ENCODE measurements at regions of chr16 and their contacts with region 1.

Region 1: GRCh38 chr16:8950580-8951077 is 13.1 kb downstream of the USP7 start:
- DNase-seq: no peak
- ATAC-seq: no peak
- H3K4me3 Mint-ChIP-seq: peak overlapping the region; percentile 35
- H3K27ac Mint-ChIP-seq: peak overlapping the region; percentile 30
- H3K4me1 Mint-ChIP-seq: peaks cover 88% of the 10 kb centered on the region
- H3K27me3 Mint-ChIP-seq: no peaks in the 10 kb centered on the region
- CTCF ChIP-seq: no peak

Region 2: GRCh38 chr16:8936421-8936820 is 14.2 kb before region 1 on chr16:
- CTCF ChIA-PET with region 1: interaction called, 24 read pairs
- POLR2A ChIA-PET with region 1: no interaction called
- intact Hi-C with region 1: no loop called
- DNase-seq: no peak
- ATAC-seq: peak; percentile 98
- H3K4me3 Mint-ChIP-seq: no peak overlapping the region
- H3K27ac Mint-ChIP-seq: peak overlapping the region; percentile 50
- H3K4me1 Mint-ChIP-seq: peaks cover 92% of the 10 kb centered on the region
- H3K27me3 Mint-ChIP-seq: no peaks in the 10 kb centered on the region
- CTCF ChIP-seq: no peak

Region 3: GRCh38 chr16:9297437-9298113 is 346.9 kb after region 1 on chr16:
- CTCF ChIA-PET with region 1: no interaction called
- POLR2A ChIA-PET with region 1: no interaction called
- intact Hi-C with region 1: no loop called
- DNase-seq: no peak
- ATAC-seq: no peak
- H3K4me3 Mint-ChIP-seq: no peak overlapping the region
- H3K27ac Mint-ChIP-seq: no peak overlapping the region
- H3K4me1 Mint-ChIP-seq: no peaks in the 10 kb centered on the region
- H3K27me3 Mint-ChIP-seq: peaks cover 6% of the 10 kb centered on the region
- CTCF ChIP-seq: no peak

Measured in activated B cell treated with CpG ODN at 0.5 μM for 24 hours (primary cell).